Pancreas (tissue), 10 donors: ENCODE measurements at regions of chr15 and their contacts with region 1.

Region 1: DNA sequence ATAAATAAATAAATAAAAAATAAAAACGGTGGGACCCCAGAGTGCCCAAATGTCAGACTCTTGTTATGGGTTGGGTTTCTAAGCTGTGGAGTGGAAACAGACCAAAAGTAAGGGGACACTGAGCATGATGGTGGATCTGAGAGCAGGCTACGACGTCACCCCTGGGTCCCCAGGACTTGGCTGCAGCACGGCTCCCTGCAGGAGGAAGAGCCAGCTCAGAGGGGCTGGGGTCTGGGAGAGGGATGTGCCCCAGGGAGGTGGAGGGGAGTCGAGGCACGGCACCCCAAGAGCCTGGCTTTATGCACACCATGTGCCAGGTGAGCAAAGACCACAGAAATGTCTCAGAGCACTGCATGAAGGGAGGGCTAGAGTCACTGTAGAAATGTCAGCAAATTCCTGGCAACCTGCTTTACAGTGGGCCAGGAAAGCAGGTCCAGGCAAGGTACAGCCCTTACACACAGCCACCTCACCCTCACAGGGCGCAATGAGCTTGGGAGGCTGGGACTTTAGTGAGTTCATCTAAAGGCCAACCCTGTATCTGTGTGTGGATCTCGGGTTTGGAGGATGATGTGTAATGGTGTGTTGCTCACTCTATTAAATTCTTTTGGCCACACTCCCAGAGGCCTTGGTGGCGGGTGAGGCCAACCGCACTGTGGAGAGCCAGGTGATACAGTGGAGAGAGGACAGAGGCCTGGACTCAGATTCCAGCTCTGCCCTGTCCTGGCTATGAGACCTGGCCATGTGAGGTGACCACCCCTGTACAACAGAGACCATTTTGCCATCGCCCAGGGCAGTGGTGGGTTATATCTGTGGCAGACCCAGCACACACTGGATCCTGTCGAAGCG is 14.1 kb downstream of the CTSH start:
- DNase-seq: no peak
- ATAC-seq: peak; percentile 31 to 62 (median 56)
- H3K4me3 ChIP-seq: no peak overlapping the region
- H3K27ac ChIP-seq: no peak overlapping the region
- H3K4me1 ChIP-seq: no peaks in the 10 kb centered on the region
- H3K27me3 ChIP-seq: no peaks in the 10 kb centered on the region
- CTCF ChIP-seq: no peak

Region 2: GRCh38 chr15:78979456-78980320 is 48.9 kb after region 1 on chr15:
- intact Hi-C with region 1: loop called in 1 of 3 experiments (anchors 10 kb)
- DNase-seq: peak in 4 of 6 donors; percentile 57 to 79 (median 75)
- ATAC-seq: peak; percentile 74 to 86 (median 79)
- H3K4me3 ChIP-seq: no peak overlapping the region
- H3K27ac ChIP-seq: no peak overlapping the region
- H3K4me1 ChIP-seq: no peaks in the 10 kb centered on the region
- H3K27me3 ChIP-seq: no peaks in the 10 kb centered on the region
- CTCF ChIP-seq: peak; percentile 59 to 73 (median 68)

Region 3: GRCh38 chr15:79192462-79193036 is 261.8 kb after region 1 on chr15:
- intact Hi-C with region 1: loop called in 1 of 3 experiments (anchors 10 kb)
- DNase-seq: no peak
- ATAC-seq: no peak
- H3K4me3 ChIP-seq: no peak overlapping the region
- H3K27ac ChIP-seq: no peak overlapping the region
- H3K4me1 ChIP-seq: no peaks in the 10 kb centered on the region
- H3K27me3 ChIP-seq: peaks cover 0 to 4% (median 0%) of the 10 kb centered on the region in 4 donors
- CTCF ChIP-seq: no peak